ENCODE measurements at regions of chr1 and their contacts with region 1.

Region 1: GRCh38 chr1:180178511-180179161 is 24.0 kb downstream of the QSOX1 start:
- DNase-seq: no peak
- ATAC-seq: no peak

Region 2: DNA sequence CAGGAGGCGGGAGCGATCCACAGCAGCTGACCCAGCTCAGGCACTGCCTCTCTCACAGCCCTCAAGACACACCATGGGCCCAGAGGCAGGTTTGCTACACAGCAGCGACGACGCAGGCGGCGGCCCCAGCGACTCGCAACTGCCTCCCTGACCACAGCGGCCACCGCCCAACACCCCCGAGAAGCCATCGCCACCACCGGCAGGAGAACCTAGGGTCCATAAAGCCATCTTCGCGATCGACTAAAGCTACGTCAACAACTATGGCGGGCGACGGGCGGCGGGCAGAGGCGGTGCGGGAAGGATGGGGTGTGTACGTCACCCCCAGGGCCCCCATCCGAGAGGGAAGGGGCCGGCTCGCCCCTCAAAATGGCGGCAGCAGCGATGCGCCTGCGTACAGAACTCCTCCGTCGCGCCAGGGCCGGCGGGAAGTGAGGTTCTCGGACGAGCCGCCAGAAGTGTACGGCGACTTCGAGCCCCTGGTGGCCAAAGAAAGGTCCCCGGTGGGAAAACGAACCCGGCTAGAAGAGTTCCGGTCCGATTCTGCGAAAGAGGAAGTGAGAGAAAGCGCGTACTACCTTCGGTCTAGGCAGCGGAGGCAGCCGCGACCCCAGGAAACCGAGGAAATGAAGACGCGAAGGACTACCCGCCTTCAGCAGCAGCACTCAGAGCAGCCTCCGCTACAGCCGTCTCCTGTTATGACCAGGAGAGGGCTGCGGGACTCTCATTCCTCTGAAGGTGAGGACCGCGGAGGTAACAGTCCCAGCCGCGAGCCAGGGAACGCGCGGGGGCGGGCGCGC is 296.2 kb before region 1 on chr1 and contains the start of gene TOR1AIP1:
- intact Hi-C with region 1: loop called (anchors 5 kb)
- DNase-seq: peak; percentile 99
- ATAC-seq: peak; percentile 95
- total RNA-seq, gene TOR1AIP1: 41.9 TPM

Region 3: DNA sequence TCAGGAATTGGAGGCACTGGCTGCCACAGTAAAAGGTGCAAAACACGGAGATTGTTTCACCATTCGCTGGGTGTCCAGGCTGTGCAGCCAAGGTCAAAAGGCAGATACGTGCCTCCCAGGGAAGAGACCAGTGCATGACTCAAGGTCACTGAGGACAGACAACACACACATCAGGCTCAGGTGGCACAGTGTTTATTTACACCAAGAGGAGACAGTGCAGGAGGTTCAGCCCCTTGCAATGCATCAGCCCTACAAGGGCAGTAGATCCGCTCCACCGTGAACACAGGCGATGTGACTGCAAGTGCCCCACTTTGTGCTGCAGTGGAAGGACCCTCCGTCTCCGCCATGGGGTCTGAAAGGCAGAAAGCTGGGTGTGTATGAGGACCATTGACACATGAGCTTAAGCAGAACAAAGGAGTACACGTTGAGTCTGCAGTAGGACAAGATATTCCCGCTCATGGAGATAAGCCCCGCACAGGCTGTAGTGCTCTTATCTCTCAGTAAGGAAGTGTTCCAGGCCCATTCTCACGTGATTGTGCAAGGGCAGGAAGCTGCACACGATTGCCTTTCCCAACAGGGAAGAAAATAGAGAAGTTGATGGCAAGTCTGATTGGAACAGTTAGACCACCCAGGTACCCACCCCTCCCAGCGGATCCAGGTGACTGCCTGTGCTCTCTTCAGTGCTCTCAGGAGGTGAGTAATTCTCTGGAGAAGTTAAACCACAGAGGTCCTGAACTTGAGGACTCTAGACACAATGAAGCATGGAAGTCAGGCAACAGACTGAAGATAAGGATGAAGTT is 61.5 kb before region 1 on chr1:
- intact Hi-C with region 1: loop called (anchors 2 kb)
- DNase-seq: no peak
- ATAC-seq: peak; percentile 73

Region 4: GRCh38 chr1:180154325-180155181 is 24.1 kb before region 1 on chr1 and contains the start of gene QSOX1:
- intact Hi-C with region 1: loop called (anchors 1 kb)
- DNase-seq: peak; percentile 96
- ATAC-seq: peak; percentile 95
- total RNA-seq, gene QSOX1: 97.7 TPM